IMR-90 (cell line): ENCODE measurements at regions of chr3 and their contacts with region 1.

Region 1: DNA sequence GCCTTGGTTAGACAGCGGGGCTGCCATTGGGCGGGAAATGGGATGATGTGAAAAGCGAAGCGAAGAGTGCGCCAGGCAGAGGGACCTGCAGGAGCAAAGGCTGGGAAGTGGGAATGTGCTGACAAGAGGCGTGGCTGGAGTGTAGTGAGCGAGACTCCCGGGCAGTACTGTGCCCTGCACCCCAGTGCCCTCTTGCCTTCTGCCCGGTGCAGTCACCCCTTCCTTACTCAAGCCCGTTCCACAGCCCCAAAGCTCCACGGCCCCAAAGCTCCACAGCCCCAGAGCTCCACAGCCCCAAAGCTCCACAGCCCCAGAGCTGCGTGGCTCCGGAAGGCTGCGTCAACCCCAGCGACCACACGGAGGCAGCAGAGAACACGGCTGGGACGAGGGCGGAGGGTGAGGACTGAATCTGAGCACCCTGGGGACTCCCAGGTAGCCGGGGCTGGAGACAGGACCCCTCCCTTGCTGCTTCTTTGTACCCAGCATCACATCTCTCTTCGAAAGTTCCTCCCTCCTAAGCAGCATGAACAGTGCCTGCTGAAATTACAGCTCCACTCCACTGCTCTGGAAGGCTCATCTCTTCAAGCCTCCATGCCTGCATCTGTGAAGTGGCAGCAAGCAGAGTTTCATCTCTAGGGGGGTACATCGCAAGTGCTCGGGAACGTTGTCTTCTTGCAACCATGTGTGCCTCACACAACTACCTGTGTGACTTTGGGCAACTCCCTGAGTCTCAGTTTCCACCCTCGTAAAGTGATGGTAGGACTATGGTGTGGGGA is 108.9 kb downstream of the FBLN2 start:
- DNase-seq: peak; percentile 22
- ATAC-seq: peak; percentile 96
- H3K4me3 ChIP-seq: no peak overlapping the region
- H3K27ac ChIP-seq: no peak overlapping the region
- H3K4me1 ChIP-seq: no peaks in the 10 kb centered on the region
- H3K27me3 ChIP-seq: peaks cover 6% of the 10 kb centered on the region; the same call in 1 of the 2 replicates
- CTCF ChIP-seq: peak; percentile 75
- POLR2A ChIP-seq: no peak
- RAD21 ChIP-seq: peak; percentile 66

Region 2: GRCh38 chr3:13621381-13622221 is 36.2 kb before region 1 on chr3:
- CTCF ChIA-PET with region 1: no interaction called
- POLR2A ChIA-PET with region 1: no interaction called
- dilution Hi-C with region 1: no loop called
- in situ Hi-C with region 1: no loop called
- intact Hi-C with region 1: no loop called
- DNase-seq: no peak
- ATAC-seq: no peak
- H3K4me3 ChIP-seq: no peak overlapping the region
- H3K27ac ChIP-seq: no peak overlapping the region
- H3K4me1 ChIP-seq: no peaks in the 10 kb centered on the region
- H3K27me3 ChIP-seq: no peaks in the 10 kb centered on the region
- CTCF ChIP-seq: no peak
- POLR2A ChIP-seq: no peak
- RAD21 ChIP-seq: no peak

Region 3: GRCh38 chr3:14170531-14171173 is 512.8 kb after region 1 on chr3:
- CTCF ChIA-PET with region 1: no interaction called
- POLR2A ChIA-PET with region 1: no interaction called
- dilution Hi-C with region 1: no loop called
- in situ Hi-C with region 1: no loop called
- intact Hi-C with region 1: loop called (anchors 5 kb)
- DNase-seq: peak; percentile 90
- ATAC-seq: peak; percentile 74
- H3K4me3 ChIP-seq: no peak overlapping the region
- H3K27ac ChIP-seq: no peak overlapping the region; the same call in 1 of the 2 replicates
- H3K4me1 ChIP-seq: peaks cover 6% of the 10 kb centered on the region
- H3K27me3 ChIP-seq: no peaks in the 10 kb centered on the region
- CTCF ChIP-seq: no peak
- POLR2A ChIP-seq: no peak
- RAD21 ChIP-seq: no peak

Region 4: DNA sequence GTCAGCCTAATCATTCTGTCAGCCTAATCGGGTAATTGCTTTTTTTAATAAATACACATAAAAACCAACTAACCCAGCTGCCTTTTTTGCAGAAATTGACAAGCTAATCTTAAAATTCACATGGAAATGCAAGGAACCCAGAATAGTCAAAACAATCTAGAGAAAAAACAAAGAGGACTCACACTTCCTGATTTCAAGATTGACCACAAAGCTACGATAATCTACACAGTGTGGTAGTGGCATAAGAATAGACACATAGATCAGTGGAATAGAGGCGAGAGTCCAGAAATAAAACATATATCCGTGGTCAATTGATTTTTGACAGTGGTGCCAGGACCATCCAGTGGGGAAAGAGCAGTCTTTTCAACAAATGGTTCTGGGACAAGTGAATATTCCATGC is 1014.7 kb after region 1 on chr3:
- CTCF ChIA-PET with region 1: no interaction called
- POLR2A ChIA-PET with region 1: no interaction called
- dilution Hi-C with region 1: no loop called
- in situ Hi-C with region 1: no loop called
- intact Hi-C with region 1: loop called (anchors 5 kb)
- DNase-seq: no peak
- ATAC-seq: no peak
- H3K4me3 ChIP-seq: no peak overlapping the region
- H3K27ac ChIP-seq: no peak overlapping the region
- H3K4me1 ChIP-seq: no peaks in the 10 kb centered on the region
- H3K27me3 ChIP-seq: no peaks in the 10 kb centered on the region
- CTCF ChIP-seq: no peak
- POLR2A ChIP-seq: no peak
- RAD21 ChIP-seq: no peak